GM10248 (cell line): ENCODE measurements at regions of chr11 and their contacts with region 1.

Region 1: DNA sequence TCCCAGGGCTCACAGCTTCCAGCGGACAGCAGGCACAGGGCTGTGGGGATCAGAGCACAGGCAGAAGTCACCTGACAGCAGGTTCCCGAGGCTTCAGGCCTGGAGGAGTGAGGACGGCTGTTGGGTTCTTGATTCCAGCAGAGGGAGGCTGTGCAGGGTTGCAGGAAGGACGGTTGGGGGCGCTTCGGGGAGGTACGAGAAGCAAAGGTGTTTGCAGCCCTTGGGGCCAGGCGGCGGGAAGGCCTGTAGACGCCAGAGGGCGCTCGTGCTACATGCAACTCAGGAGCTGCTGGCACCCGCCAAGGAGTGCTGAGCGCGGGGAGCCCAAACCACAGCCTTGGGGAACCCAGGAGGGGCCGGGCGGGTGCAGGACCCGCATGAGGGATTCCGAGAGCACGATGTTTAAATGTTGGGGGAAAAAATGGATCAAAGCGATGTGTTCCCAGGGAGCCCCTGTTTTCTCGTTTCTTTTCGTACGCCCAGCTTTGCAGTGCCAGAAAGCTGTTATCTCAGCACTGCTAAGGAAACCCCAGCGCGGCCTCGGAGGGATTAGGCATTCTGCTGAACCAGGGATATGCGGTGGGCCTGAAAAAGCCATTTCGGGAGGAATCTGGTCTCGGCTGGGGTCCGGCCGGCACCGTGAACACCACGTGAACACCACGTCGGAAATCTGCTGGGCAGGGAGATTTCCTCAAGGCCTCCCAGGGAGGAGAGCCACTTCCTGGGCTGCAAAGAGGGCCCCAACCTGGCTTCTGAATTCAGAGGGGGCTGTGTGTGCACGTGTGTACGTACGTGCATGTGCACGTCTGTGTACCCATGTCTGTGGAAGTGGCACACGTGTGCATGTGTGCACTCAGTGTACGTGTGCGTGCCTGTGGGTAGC is 88.1 kb downstream of the KCNQ1 start:
- DNase-seq: peak; percentile 89
- CTCF ChIP-seq: peak; percentile 97

Region 2: GRCh38 chr11:2342981-2343380 is 190.0 kb before region 1 on chr11:
- CTCF ChIA-PET with region 1: no interaction called
- POLR2A ChIA-PET with region 1: no interaction called
- DNase-seq: no peak
- CTCF ChIP-seq: no peak

Region 3: DNA sequence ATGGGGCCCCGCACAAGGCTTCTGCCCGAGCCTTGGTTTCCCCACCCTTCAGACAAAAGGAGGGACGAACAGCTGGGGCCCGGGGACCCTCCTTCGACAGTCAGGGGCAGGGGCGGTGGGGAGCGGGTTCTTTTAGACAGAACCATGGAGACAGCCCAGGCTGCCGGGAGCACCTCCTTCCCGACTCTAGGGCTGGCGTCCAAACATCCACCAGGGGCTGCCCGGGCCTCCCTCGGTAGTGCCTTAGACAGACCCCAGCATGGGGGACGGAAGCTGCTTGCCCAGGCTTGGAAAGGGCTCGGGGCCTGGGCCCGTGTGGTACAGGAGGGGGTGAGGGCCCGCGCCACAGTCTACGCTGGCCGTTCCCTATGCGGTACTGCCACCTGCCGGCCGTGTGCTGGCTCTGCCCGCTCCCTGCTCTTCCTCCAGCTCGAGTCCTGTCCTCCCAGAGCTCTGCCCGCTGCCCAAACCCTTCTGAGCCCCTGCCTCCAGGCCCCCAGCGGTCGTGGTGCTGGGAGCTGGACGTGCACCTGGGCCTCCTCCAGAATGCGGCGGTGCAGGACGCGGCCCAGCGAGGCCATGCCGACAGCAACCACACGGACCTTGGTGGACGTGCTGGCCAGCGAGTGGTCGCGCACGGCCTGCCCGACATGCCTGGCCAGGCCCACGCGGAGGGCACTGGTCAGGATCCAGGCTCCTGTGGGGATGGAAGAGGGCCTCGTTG is 112.3 kb before region 1 on chr11:
- CTCF ChIA-PET with region 1: interaction called, 204 read pairs
- POLR2A ChIA-PET with region 1: no interaction called
- DNase-seq: peak; percentile 92
- CTCF ChIP-seq: peak; percentile 96

Region 4: DNA sequence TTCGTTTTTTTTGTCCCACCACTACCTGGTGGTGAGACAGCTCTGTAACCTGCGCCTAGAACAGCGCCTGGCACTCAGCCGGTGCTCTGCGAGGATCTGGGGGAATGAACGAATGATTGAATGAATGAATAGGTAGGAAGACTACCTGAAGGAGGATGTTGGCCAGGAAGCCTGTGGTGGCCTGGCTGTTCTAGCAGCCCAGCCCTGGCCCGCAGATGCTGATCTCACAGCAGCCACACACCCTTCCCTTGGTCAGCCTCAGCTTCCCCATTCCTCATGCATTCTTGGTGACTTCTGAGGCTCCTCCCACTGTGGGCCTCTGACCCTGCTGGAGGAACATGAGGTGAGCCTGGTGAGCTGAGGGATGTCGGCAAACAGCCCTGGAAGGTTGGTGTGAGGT is 92.3 kb before region 1 on chr11:
- CTCF ChIA-PET with region 1: interaction called, 11 read pairs
- POLR2A ChIA-PET with region 1: no interaction called
- DNase-seq: no peak
- CTCF ChIP-seq: no peak

Region 5: GRCh38 chr11:2885676-2886081 is 352.7 kb after region 1 on chr11 and contains the start of gene CDKN1C:
- CTCF ChIA-PET with region 1: interaction called, 528 read pairs
- POLR2A ChIA-PET with region 1: no interaction called
- DNase-seq: peak; percentile 90
- CTCF ChIP-seq: no peak

Region 6: DNA sequence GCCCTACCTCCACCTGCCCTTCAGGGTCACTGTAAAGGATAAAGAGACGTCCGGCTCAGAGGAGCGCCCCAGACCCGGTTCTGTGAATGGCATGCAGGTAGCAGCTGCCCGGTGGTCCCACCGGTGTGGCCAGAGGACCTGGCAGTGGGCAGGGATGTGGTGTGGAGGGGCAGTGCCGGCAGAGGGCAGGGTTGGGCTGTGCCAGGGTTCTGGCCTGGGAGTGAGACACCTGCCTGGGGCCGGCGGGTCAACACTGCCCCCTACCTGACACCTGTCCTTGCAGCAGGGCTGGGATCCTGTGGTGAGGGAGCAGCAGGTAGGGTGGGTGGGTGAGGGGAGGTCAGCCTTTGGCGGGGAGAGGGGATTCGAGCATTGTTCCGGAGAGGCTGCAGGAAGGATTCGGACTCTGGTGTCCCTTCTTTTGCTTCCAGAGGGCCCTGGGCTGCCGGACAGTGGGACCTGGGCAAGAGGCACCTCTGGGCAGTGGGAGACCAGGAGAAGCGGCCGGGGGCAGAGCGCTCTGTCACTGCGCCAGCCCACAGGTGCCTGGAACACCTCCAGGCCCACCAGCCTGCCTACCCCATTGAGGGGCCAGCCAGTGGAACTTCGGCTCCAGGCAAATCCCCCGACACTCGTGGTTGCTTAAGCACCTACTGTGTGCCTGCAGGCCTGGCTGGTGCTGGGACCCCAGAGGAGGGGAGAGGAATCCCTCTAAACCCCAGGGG is 397.9 kb after region 1 on chr11:
- CTCF ChIA-PET with region 1: interaction called, 39 read pairs
- POLR2A ChIA-PET with region 1: no interaction called
- DNase-seq: peak; percentile 82
- CTCF ChIP-seq: peak; percentile 72

Region 7: GRCh38 chr11:3091791-3092602 is 559.1 kb after region 1 on chr11:
- CTCF ChIA-PET with region 1: interaction called, 36 read pairs
- POLR2A ChIA-PET with region 1: no interaction called
- DNase-seq: peak; percentile 93
- CTCF ChIP-seq: peak; percentile 95